ENCODE measurements at regions of chr1 and their contacts with region 1.

Region 1: DNA sequence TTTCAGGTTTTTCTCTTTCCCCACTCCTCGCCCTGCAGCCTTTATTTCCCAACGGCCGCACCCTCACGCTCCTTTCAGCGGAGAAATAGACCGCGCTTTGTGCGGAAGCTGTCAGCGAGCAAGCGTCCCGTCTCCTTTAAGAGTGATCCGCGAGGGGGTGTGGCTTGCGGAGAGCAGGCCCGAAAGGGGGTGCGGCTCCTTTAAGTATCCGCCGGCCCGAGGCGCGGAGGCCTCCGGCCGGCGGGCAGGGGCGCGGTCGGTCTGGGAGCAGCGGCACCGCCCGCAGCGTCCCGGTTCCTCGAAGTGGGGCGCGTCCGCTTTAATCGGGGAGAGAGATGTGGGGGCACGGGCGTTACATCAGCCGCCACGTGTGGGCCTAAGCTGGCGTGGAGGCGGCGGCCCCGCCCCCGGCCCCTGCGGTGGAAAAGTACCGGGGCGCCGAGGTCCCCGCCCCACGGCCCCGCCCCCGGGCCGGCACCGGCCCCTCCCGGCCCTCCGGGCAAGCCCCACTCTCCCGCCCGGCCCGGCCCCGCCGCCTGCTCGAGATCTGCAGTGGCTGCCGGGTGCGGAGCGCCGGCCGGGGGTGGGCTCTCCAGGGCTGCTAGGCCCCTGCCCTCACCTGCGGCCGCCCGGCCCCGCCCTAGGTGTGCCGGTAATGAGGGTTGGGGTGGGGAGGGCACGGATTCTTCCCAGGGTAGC is 1.2 kb downstream of the SLC6A9 start:
- DNase-seq: peak; percentile 65 to 92 (median 82)
- ATAC-seq: peak; percentile 79
- H3K4me3 ChIP-seq: peak overlapping the region; percentile 76
- H3K4me3 Mint-ChIP-seq: peak overlapping the region; percentile 93
- H3K27ac ChIP-seq: peak overlapping the region in 1 of 2 donors; percentile 48
- H3K27ac Mint-ChIP-seq: peak overlapping the region; percentile 82
- H3K4me1 ChIP-seq: peaks cover 21% of the 10 kb centered on the region
- H3K4me1 Mint-ChIP-seq: peaks cover 34% of the 10 kb centered on the region
- H3K27me3 ChIP-seq: no peaks in the 10 kb centered on the region
- H3K27me3 Mint-ChIP-seq: no peaks in the 10 kb centered on the region
- CTCF ChIP-seq: no peak

Region 2: DNA sequence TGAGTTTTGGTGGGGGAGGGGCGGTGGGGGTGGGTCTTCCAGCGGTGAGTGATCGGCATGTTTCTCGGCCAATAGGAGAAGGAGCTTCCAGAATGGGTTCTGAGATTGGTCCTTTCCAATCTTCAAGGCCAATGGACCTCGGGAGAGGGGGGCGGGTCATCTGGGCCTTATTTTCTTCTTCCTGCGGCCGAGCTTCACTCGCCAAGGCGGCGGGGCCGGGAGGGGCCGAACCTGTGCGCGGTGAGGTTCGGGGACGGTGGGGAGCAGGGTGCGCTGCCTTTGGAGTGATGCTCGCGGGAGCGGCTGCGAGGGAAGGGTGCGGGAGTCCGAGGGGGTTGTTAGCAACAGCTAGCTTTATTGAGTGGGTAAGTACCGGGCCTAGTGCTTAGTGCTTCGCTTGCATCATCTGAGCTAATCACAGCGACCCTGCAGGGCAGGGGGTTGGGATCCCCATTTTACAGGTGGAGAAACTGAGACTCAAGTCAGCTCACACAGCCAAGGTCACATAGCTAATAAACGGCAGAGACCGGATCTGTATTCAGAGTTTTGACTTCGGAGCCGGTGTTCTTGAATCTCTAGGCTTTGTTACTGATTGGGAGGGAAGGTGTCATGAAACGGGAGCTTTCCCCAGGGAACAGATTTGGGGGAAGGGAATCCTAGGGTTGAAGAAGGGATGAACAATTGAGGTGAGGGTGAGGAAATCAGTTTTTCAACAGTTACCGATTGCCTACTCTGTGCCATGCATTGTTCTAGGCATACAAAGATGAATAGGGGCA is 379.6 kb before region 1 on chr1:
- CTCF ChIA-PET with region 1: no interaction called
- POLR2A ChIA-PET with region 1: no interaction called
- intact Hi-C with region 1: loop called in 1 of 2 experiments (anchors 5 kb)
- DNase-seq: peak in 13 of 14 experiments; percentile 78 to 96 (median 86)
- ATAC-seq: peak; percentile 71
- H3K4me3 ChIP-seq: peak overlapping the region; percentile 91
- H3K4me3 Mint-ChIP-seq: peak overlapping the region; percentile 98
- H3K27ac ChIP-seq: peak overlapping the region; percentile 75 to 79
- H3K27ac Mint-ChIP-seq: peak overlapping the region; percentile 90
- H3K4me1 ChIP-seq: peaks cover 32% of the 10 kb centered on the region
- H3K4me1 Mint-ChIP-seq: peaks cover 41% of the 10 kb centered on the region
- H3K27me3 ChIP-seq: no peaks in the 10 kb centered on the region
- H3K27me3 Mint-ChIP-seq: no peaks in the 10 kb centered on the region
- CTCF ChIP-seq: no peak

Region 3: DNA sequence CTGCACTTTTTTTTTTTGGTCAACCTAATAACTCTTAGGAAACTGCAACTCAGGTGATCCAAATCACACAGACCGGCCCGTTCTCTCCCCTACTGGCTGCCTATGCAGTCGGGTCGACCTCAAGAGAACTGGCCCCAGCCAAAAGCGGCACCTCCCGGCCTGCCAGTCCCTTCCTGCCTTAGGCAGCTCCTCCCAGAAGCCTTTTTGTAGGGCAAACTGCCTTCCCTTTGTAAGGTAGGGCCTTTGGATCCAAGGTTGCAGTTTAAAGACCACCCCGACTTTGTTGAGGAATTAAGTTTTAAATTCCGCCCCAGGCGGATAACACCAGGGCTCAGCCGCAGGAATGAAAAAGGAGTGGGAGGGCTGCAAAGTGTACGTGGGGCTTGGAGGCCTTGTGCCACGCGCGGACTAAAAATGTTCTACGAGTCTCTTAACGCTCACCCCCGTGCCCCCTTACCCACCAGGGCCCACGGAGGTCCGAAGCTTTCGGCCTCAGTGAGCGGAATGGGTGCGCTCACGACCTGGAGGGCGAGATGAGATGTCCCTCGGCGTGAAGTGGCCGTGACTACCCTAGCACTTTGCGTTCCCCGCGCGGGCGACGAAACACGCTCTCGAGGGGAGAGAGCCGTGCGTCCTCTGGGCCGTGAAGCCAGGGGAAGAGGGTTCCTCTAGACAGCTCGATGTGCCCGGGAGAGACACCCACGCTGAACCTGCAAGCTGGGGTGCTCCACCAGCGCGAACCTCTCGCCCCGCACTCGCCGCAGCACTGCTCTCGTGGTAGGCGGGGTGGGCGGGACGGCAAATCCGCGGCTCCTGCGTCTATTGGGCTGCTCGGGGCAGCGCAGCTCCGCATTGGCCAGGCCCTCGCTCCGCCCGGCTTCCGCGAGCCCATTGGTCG is 323.2 kb before region 1 on chr1:
- CTCF ChIA-PET with region 1: no interaction called
- POLR2A ChIA-PET with region 1: no interaction called
- intact Hi-C with region 1: loop called in 1 of 2 experiments (anchors 2 kb)
- DNase-seq: peak; percentile 82 to 95 (median 88)
- ATAC-seq: peak; percentile 99
- H3K4me3 ChIP-seq: peak overlapping the region; percentile 82
- H3K4me3 Mint-ChIP-seq: peak overlapping the region; percentile 91
- H3K27ac ChIP-seq: peak overlapping the region in 1 of 2 donors; percentile 43
- H3K27ac Mint-ChIP-seq: peak overlapping the region; percentile 73
- H3K4me1 ChIP-seq: peaks cover 19% of the 10 kb centered on the region
- H3K4me1 Mint-ChIP-seq: peaks cover 28% of the 10 kb centered on the region
- H3K27me3 ChIP-seq: no peaks in the 10 kb centered on the region
- H3K27me3 Mint-ChIP-seq: no peaks in the 10 kb centered on the region
- CTCF ChIP-seq: no peak

Region 4: DNA sequence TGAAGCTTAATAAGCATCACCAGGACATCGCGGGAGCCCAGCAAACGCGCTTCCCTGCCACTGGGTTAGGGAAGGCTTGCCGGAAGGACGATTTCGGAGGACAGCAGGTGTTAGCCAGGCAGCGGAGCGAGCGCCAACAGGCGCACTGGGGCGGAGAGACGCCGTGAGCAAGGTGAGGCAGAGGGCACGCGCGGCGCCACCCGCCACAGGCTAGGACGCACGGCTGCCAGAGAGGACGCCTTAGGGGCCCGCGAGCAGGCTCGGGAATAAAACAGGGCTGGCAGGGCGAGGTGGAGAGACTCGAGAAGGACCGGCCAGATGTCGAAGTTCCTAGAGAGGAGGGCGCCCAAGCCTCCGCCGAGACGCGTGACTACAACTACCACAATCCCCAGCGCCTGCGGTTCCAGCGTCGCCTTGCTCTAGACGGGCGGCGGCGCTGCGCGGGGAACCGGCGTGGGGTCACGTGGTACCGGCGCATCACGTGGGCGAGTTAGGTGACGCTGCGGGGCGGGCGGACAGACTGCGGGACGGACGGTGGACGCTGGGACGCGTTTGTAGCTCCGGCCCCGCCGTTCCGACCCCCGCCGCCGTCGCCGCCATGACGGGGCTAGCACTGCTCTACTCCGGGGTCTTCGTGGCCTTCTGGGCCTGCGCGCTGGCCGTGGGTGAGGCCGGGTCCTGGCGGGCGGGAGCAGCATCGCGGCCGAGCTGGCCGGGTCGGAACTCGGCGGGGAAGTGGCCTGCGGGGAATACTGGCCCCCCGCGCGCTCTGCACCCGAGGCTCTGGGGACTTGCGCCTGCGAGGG is 55.4 kb before region 1 on chr1 and contains the start of gene ATP6V0B:
- CTCF ChIA-PET with region 1: interaction called, 13 read pairs
- POLR2A ChIA-PET with region 1: interaction called, 10 read pairs
- intact Hi-C with region 1: loop called in 1 of 2 experiments (anchors 2 kb)
- DNase-seq: peak; percentile 85 to 96 (median 91)
- ATAC-seq: peak; percentile 72
- H3K4me3 ChIP-seq: peak within 1 kb of the TSS; percentile 99
- H3K4me3 Mint-ChIP-seq: peak within 1 kb of the TSS; percentile 96
- H3K27ac ChIP-seq: peak within 1 kb of the TSS; percentile 78 to 86
- H3K27ac Mint-ChIP-seq: peak within 1 kb of the TSS; percentile 92
- H3K4me1 ChIP-seq: peaks cover 61% of the 10 kb centered on the region
- H3K4me1 Mint-ChIP-seq: peaks cover 68% of the 10 kb centered on the region
- H3K27me3 ChIP-seq: peaks cover under 1% of the 10 kb centered on the region in 2 experiments
- H3K27me3 Mint-ChIP-seq: peaks cover under 1% of the 10 kb centered on the region
- CTCF ChIP-seq: no peak
- total RNA-seq, gene ATP6V0B: 42.9 to 47.0 TPM

Region 5: DNA sequence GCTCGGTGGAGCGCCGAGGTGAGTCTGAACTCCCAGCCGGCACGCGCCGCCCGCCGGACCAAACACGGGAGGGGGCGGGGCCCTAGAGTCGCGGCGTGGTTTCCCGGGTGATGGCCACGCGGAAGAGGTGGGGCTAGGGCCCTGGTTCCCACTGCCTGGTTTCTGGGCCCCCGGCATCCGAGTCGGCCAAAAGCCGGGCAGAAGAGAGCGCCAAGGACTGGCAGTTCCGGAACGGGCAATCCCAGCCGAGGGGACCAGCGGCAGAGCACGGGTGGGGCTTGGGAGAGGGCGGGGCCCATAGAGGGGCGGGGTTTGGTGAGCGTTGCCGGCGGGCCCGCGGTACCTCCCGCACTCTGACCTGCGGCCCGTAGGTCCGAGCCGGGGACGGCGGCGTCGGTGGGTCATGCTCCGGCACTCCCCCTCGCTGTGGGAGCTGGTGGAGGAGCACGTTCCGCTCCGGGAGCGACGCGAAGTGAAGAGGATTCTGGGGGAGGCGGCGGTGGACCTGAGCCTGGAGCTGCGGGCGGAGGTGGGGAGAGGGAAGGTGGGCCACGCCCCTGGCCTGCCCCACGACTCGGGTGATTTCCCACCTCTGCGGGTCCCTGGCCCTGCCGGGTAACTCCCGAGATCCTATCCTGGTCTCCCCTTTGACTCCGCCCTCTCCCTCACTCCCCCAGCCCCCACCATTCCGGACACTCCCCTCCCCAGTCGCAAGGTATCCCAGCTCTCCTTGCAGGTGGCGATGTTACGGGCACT is 38.4 kb before region 1 on chr1 and contains the start of gene CCDC24:
- CTCF ChIA-PET with region 1: no interaction called
- POLR2A ChIA-PET with region 1: no interaction called
- intact Hi-C with region 1: loop called (anchors 1 to 5 kb)
- DNase-seq: peak; percentile 39 to 87 (median 67)
- ATAC-seq: peak; percentile 82
- H3K4me3 ChIP-seq: peak within 1 kb of the TSS; percentile 78
- H3K4me3 Mint-ChIP-seq: peak within 1 kb of the TSS; percentile 95
- H3K27ac ChIP-seq: no peak within 1 kb of the TSS
- H3K27ac Mint-ChIP-seq: peak within 1 kb of the TSS; percentile 62
- H3K4me1 ChIP-seq: peaks cover 19% of the 10 kb centered on the region
- H3K4me1 Mint-ChIP-seq: peaks cover 16% of the 10 kb centered on the region
- H3K27me3 ChIP-seq: no peaks in the 10 kb centered on the region
- H3K27me3 Mint-ChIP-seq: no peaks in the 10 kb centered on the region
- CTCF ChIP-seq: no peak
- total RNA-seq, gene CCDC24: 0.98 to 1.4 TPM

Region 6: DNA sequence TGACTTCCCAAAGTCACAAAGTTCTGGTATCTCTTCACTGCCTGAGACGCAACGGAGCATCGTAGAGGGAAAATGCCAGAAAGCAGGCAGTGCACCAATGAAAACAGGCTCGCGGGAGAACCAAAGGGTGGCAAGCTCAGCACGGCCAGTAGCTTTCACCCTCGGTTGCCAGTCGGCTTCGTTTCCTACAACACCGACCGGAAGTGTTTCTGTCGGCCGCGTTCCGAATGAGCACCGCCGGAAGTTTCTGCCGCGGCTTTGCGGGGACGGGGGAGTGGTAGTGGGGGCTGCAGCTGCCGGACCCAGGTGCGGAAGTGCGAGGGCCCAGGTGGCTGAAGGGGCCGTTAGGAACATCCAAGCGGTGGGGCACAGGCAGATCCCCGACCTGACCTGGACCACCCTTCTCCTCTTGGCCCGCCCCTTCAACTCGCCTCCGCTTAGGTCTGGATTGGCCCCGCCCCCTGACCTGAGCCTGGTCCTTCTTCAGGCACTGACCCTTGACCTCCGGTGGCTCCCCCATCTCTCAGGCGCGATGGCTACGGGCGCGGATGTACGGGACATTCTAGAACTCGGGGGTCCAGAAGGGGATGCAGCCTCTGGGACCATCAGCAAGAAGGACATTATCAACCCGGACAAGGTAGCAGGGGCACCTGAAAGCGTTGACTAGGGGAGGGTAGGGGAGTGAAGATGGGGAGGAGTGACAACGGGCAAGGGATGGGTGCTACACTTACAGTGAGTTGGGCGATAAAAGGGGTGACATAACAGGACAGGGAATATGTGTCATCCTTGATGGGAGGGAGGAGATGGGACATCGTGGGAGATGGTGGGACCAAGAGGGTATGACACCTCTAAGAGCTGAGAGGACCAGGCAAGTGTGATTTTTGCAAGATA is 183.4 kb after region 1 on chr1 and contains the start of gene DMAP1:
- CTCF ChIA-PET with region 1: no interaction called
- POLR2A ChIA-PET with region 1: no interaction called
- intact Hi-C with region 1: loop called in 1 of 2 experiments (anchors 5 kb)
- DNase-seq: peak; percentile 77 to 92 (median 82)
- ATAC-seq: peak; percentile 89
- H3K4me3 ChIP-seq: peak within 1 kb of the TSS; percentile 92
- H3K4me3 Mint-ChIP-seq: peak within 1 kb of the TSS; percentile 98
- H3K27ac ChIP-seq: peak within 1 kb of the TSS; percentile 64 to 75
- H3K27ac Mint-ChIP-seq: peak within 1 kb of the TSS; percentile 93
- H3K4me1 ChIP-seq: peaks cover 29% of the 10 kb centered on the region
- H3K4me1 Mint-ChIP-seq: peaks cover 47% of the 10 kb centered on the region
- H3K27me3 ChIP-seq: no peaks in the 10 kb centered on the region
- H3K27me3 Mint-ChIP-seq: no peaks in the 10 kb centered on the region
- CTCF ChIP-seq: no peak
- total RNA-seq, gene DMAP1: 53.4 to 56.9 TPM

Region 7: GRCh38 chr1:44674113-44675000 is 644.3 kb after region 1 on chr1 and contains the starts of genes ARMH1 and TMEM53:
- CTCF ChIA-PET with region 1: no interaction called
- POLR2A ChIA-PET with region 1: no interaction called
- intact Hi-C with region 1: loop called in 1 of 2 experiments (anchors 5 kb)
- DNase-seq: peak; percentile 91 to 99 (median 96)
- ATAC-seq: peak; percentile 90
- H3K4me3 ChIP-seq: peak within 1 kb of the TSS; percentile 86
- H3K4me3 Mint-ChIP-seq: peak within 1 kb of the TSS; percentile 93
- H3K27ac ChIP-seq: peak within 1 kb of the TSS; percentile 75 to 86
- H3K27ac Mint-ChIP-seq: peak within 1 kb of the TSS; percentile 84
- H3K4me1 ChIP-seq: peaks cover 31% of the 10 kb centered on the region
- H3K4me1 Mint-ChIP-seq: peaks cover 29% of the 10 kb centered on the region
- H3K27me3 ChIP-seq: no peaks in the 10 kb centered on the region
- H3K27me3 Mint-ChIP-seq: no peaks in the 10 kb centered on the region
- CTCF ChIP-seq: no peak
- total RNA-seq, gene ARMH1: 79.9 to 84.0 TPM
- total RNA-seq, gene TMEM53: 0.64 to 1.2 TPM